ENCODE measurements at regions of chr3 and their contacts with region 1.

Region 1: DNA sequence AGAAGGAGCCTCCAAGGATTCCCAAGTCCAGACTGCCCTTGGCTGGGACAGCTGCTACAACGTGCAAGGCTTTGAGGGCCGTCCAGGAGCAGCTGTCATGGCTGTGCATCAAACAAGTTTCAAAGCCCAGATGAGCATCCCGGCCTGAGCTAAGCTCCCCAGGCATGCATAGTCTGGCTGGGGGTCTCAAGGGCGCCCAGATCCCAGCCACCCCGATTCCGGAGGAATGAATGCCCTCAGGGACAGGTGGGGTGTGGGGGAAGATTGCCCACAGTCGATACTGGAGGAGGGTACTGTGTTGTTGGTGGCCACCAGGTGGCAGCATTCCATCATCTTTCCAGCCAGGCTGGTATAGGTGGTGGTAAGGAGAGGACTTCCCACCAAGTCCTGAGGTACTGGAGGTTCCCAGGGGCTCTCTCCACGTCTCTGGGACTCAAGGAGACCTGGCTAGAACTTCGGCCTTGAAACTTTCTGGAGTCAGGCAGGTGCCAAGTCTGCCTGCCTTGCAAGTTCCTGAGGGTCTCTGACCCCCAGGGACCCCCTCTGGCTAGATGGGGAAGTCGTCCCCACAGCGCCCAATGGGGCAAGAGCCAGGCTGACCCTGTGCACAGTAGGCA is 32.8 kb downstream of the RBM5 start:
- DNase-seq: peak; percentile 64 to 85
- H3K4me3 ChIP-seq: no peak overlapping the region
- H3K27ac ChIP-seq: peak overlapping the region in 1 of 2 donors; percentile 30
- H3K4me1 ChIP-seq: peaks cover 21 to 23% of the 10 kb centered on the region in 2 donors
- H3K27me3 ChIP-seq: no peaks in the 10 kb centered on the region
- CTCF ChIP-seq: peak; percentile 84 to 94 (median 86)
- POLR2A ChIP-seq: no peak

Region 2: GRCh38 chr3:49276475-49277382 is 844.8 kb before region 1 on chr3 and contains the start of gene C3orf62:
- intact Hi-C with region 1: no loop called
- DNase-seq: peak; percentile 84 to 94
- H3K4me3 ChIP-seq: peak within 1 kb of the TSS; percentile 44 to 71 (median 58)
- H3K27ac ChIP-seq: peak within 1 kb of the TSS; percentile 91 to 97
- H3K4me1 ChIP-seq: peaks cover 0 to 5% of the 10 kb centered on the region in 2 donors
- H3K27me3 ChIP-seq: no peaks in the 10 kb centered on the region
- CTCF ChIP-seq: no peak
- POLR2A ChIP-seq: no peak
- total RNA-seq, gene C3orf62: 4.2 to 5.1 (median 4.3) TPM

Region 3: GRCh38 chr3:50192689-50193141 is 71.2 kb after region 1 on chr3:
- intact Hi-C with region 1: loop called (anchors 10 kb)
- DNase-seq: peak; percentile 51 to 79
- H3K4me3 ChIP-seq: peak overlapping the region in 1 of 3 donors; percentile 47
- H3K27ac ChIP-seq: no peak overlapping the region
- H3K4me1 ChIP-seq: peaks cover 0 to 4% of the 10 kb centered on the region in 2 donors
- H3K27me3 ChIP-seq: peaks cover 14 to 30% of the 10 kb centered on the region in 2 donors
- CTCF ChIP-seq: peak; percentile 84 to 94 (median 87)
- POLR2A ChIP-seq: no peak